A673 (cell line): ENCODE measurements at regions of chr11 and their contacts with region 1.

Region 1: GRCh38 chr11:27183672-27184457 is 143.2 kb downstream of the BBOX1 start:
- DNase-seq: peak; percentile 94
- H3K4me3 ChIP-seq: no peak overlapping the region
- H3K27ac ChIP-seq: no peak overlapping the region
- H3K4me1 ChIP-seq: peaks cover 11% of the 10 kb centered on the region
- H3K27me3 ChIP-seq: no peaks in the 10 kb centered on the region
- CTCF ChIP-seq: peak; percentile 100

Region 2: DNA sequence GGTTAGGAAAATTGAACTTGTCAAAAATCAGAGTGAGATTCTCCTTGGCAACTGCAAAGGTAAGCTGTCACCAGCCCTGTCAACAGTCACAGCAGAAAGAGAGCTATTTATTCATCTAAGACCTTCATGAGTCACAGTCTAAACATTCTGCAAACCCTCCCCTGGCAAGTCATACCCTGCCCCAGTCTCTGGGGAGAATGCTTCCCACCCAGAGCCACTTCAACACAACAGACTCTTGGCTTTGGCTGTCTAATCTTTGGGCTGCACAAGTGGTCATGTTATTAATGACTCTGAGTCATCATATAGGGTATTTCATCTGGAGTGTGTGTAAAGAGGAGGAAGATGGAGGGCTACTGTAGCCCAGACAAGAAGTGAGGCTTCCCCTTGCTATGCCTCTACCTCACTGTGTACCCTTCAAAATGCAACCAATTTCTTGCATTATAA is 25.7 kb after region 1 on chr11:
- CTCF ChIA-PET with region 1: interaction called, 10 read pairs
- POLR2A ChIA-PET with region 1: no interaction called
- intact Hi-C with region 1: no loop called
- DNase-seq: peak; percentile 100
- H3K4me3 ChIP-seq: no peak overlapping the region
- H3K27ac ChIP-seq: no peak overlapping the region
- H3K4me1 ChIP-seq: peaks cover 76% of the 10 kb centered on the region
- H3K27me3 ChIP-seq: no peaks in the 10 kb centered on the region
- CTCF ChIP-seq: no peak

Region 3: GRCh38 chr11:27291302-27291889 is 107.5 kb after region 1 on chr11:
- CTCF ChIA-PET with region 1: interaction called, 81 read pairs
- POLR2A ChIA-PET with region 1: no interaction called
- intact Hi-C with region 1: loop called (anchors 1 kb)
- DNase-seq: no peak
- H3K4me3 ChIP-seq: no peak overlapping the region
- H3K27ac ChIP-seq: no peak overlapping the region
- H3K4me1 ChIP-seq: peaks cover 18% of the 10 kb centered on the region
- H3K27me3 ChIP-seq: no peaks in the 10 kb centered on the region
- CTCF ChIP-seq: no peak

Region 4: DNA sequence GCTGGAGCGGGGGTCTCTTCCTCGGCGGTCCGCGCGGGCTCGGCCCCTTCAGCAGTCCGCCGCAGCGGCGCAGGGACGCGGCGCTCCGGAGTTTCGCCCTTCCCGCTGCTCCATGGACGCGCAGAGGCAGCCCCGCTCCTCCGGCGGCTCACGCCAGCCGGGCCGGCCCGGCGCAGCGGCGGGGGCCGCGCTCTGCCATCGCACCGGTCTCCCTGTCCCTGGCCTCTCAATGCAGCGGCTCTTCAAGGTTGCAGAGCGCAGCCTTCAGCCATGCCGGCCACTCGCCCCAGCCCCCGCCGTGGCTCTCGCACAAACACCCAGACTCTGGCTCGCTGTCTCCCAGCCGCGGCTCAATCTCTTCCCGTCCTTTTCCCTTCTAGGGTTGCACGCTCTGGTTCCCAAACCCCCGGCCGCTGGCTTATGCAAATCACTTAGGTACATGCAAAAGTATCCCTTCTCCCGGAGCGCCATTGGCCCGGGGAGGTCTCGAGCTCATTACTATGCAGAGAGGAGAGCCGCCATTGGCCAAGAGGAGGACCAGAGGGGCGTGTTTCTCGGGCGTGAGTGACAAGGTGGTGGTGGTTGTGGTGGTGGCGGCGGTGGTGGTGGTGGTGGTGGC is 288.6 kb after region 1 on chr11 and contains the start of gene LGR4:
- CTCF ChIA-PET with region 1: interaction called, 13 read pairs
- POLR2A ChIA-PET with region 1: no interaction called
- intact Hi-C with region 1: no loop called
- DNase-seq: peak; percentile 100
- H3K4me3 ChIP-seq: peak within 1 kb of the TSS; percentile 72
- H3K27ac ChIP-seq: peak within 1 kb of the TSS; percentile 81
- H3K4me1 ChIP-seq: peaks cover 32% of the 10 kb centered on the region
- H3K27me3 ChIP-seq: no peaks in the 10 kb centered on the region
- CTCF ChIP-seq: no peak
- total RNA-seq, gene LGR4: 24.7 and 27.9 TPM in 2 replicates

Region 5: GRCh38 chr11:27497284-27497866 is 313.5 kb after region 1 on chr11:
- CTCF ChIA-PET with region 1: interaction called, 10 read pairs
- POLR2A ChIA-PET with region 1: no interaction called
- intact Hi-C with region 1: no loop called
- DNase-seq: peak; percentile 84
- H3K4me3 ChIP-seq: no peak overlapping the region
- H3K27ac ChIP-seq: no peak overlapping the region
- H3K4me1 ChIP-seq: peaks cover 15% of the 10 kb centered on the region
- H3K27me3 ChIP-seq: no peaks in the 10 kb centered on the region
- CTCF ChIP-seq: peak; percentile 95